Activated CD4-positive, alpha-beta memory T cell treated with anti-CD3 and anti-CD28 coated beads for 36 hours (primary cell): ENCODE measurements at regions of chr6 and their contacts with region 1.

Region 1: GRCh38 chr6:41135062-41135832 is 18.9 kb downstream of the TREML1 start:
- DNase-seq: no peak
- H3K4me3 Mint-ChIP-seq: no peak overlapping the region
- H3K27ac Mint-ChIP-seq: no peak overlapping the region
- H3K4me1 Mint-ChIP-seq: no peaks in the 10 kb centered on the region
- H3K27me3 Mint-ChIP-seq: no peaks in the 10 kb centered on the region

Region 2: DNA sequence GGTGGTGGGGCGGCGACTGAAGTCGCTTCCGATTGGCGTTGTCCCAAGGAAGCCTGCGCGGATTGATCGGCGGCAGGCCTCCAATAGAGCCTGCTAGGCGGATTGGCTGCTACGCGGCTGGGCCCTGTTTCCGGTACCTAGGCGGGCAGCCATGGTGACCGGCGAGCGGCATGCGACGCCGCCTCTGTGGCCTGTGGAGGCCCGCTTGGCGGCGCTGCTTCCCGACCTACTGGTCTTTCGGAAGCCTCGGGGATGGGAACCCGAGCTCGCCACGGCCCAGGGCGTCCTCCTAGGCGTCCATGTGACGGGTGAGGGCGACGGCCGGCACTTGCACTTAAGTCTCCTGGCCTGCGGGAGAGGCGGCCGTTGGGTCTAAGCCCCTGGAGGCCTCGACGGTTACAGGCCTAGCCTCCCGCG is 34.4 kb before region 1 on chr6:
- CTCF ChIA-PET with region 1: no interaction called
- POLR2A ChIA-PET with region 1: no interaction called
- intact Hi-C with region 1: loop called (anchors 5 kb)
- DNase-seq: no peak
- H3K4me3 Mint-ChIP-seq: no peak overlapping the region
- H3K27ac Mint-ChIP-seq: no peak overlapping the region
- H3K4me1 Mint-ChIP-seq: no peaks in the 10 kb centered on the region
- H3K27me3 Mint-ChIP-seq: no peaks in the 10 kb centered on the region

Region 3: GRCh38 chr6:41119508-41119907 is 15.7 kb before region 1 on chr6:
- CTCF ChIA-PET with region 1: no interaction called
- POLR2A ChIA-PET with region 1: no interaction called
- intact Hi-C with region 1: no loop called
- DNase-seq: no peak
- H3K4me3 Mint-ChIP-seq: no peak overlapping the region
- H3K27ac Mint-ChIP-seq: no peak overlapping the region
- H3K4me1 Mint-ChIP-seq: no peaks in the 10 kb centered on the region
- H3K27me3 Mint-ChIP-seq: no peaks in the 10 kb centered on the region

Region 4: DNA sequence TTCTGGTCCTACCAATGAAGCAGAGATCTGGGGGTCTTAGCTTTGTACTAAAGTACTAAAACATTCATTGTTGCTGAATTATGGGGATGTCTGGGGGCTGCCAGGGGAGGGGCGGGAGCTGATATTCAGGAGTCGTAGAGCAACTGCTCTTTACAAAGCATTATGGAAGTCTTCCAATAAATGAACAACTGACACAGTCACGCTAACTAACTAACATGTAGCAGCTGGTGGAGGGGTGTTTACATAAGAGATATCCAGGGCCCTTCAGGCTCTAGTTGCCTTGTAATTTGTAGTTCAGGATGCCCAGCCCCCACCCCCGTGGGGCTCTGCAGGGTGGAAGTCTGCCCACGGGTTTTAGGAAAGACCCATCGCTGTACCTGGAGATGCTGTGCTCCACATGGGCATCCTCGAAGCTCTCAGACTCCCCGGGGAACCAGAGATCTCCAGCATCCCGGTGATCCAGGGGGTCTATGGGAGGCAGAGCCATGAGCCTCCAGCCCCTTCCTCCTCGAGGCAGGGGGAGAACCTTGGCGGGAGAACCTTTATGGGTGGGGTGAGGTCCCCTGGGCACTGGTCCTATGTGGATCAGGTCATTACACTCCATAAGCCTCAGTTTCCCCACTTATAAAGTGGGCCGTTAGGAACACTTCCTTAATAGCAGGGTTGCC is 24.3 kb after region 1 on chr6:
- CTCF ChIA-PET with region 1: no interaction called
- POLR2A ChIA-PET with region 1: no interaction called
- intact Hi-C with region 1: no loop called
- DNase-seq: no peak
- H3K4me3 Mint-ChIP-seq: no peak overlapping the region
- H3K27ac Mint-ChIP-seq: no peak overlapping the region
- H3K4me1 Mint-ChIP-seq: no peaks in the 10 kb centered on the region
- H3K27me3 Mint-ChIP-seq: peaks cover 7% of the 10 kb centered on the region